ENCODE measurements at regions of chr19 and their contacts with region 1.

Region 1: GRCh38 chr19:49443366-49444099 is 2.2 kb upstream of the SLC17A7 start:
- DNase-seq: peak; percentile 97
- ATAC-seq: peak; percentile 87

Region 2: DNA sequence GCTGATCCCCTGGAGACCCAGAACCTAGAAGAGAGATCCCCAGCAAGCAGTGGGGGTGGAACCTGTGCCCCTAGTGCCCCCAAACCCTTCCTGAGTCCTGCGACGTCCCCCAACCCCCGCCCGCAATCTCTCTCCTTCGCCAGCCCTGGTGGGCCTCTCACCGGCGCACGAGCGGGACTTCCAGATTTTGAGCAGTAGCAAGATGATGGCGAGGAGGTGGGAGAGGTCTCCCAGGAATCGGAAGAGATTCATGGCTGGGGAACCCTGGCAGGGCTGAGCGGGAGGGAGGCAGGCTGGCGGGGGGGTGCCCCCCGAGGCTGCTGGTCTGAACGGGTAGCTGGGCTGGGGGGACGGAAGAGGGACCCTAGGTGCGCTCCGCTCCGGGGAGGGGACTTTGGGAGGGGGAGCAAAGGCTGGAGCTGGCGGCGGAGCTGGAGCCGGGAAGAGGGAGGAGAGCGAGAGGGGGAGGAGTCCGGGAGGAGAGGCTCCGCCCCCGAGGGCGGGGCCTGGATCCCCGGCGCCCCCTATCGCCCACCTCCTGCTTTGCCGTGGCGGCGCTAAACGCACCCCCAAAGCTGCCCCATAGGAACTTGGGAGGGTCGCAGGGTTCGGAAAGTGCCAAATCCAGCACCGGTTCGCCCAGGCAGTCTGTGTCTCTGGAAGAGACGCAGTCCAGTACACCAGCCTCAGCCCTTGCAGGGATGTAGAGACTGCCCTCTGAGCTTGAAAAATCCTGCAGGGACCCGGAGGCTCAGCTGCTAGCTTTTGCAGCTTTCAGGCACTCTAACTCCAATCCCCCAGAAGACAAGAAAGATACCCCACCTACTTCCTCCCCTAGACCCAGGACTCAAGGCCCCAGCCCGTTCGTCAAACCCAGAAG is 1052.2 kb before region 1 on chr19 and contains the start of gene KDELR1:
- intact Hi-C with region 1: no loop called
- DNase-seq: peak; percentile 89
- ATAC-seq: peak; percentile 96
- total RNA-seq, gene KDELR1: 104 TPM

Region 3: DNA sequence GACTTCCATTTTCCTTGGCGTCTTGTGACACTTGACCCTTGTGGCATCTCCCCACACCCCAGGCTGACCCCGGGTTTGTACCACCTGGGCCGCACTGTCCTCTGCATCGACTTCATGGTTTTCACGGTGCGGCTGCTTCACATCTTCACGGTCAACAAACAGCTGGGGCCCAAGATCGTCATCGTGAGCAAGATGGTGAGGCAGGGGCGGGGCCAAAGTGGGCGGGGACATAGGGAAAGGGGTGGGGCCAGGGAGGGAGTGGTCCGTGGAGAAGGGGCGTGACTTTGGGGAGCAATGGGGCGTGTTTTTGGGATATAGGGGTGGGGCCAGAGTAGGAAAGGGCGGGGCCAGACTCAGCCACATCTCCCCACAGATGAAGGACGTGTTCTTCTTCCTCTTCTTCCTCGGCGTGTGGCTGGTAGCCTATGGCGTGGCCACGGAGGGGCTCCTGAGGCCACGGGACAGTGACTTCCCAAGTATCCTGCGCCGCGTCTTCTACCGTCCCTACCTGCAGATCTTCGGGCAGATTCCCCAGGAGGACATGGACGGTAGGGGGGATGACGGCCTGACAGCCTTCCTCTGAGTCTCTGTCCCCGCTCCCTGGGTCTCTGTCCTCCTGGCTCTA is 243.2 kb before region 1 on chr19:
- intact Hi-C with region 1: no loop called
- DNase-seq: no peak
- ATAC-seq: peak; percentile 30

Region 4: GRCh38 chr19:49387936-49388372 is 55.6 kb before region 1 on chr19 and contains the start of gene KASH5:
- intact Hi-C with region 1: loop called (anchors 2 kb)
- DNase-seq: peak; percentile 87
- ATAC-seq: peak; percentile 85
- total RNA-seq, gene KASH5: not detected

Measured in sciatic nerve (tissue), 2 donors.